ENCODE measurements at regions of chr5 and their contacts with region 1.

Region 1: GRCh38 chr5:142800776-142801494 is 30.8 kb downstream of the ARHGAP26 start:
- DNase-seq: peak; percentile 72
- ATAC-seq: peak; percentile 84
- H3K4me3 Mint-ChIP-seq: peak overlapping the region; percentile 69
- H3K27ac Mint-ChIP-seq: peak overlapping the region; percentile 97
- H3K4me1 Mint-ChIP-seq: peaks cover 66% of the 10 kb centered on the region
- H3K27me3 Mint-ChIP-seq: no peaks in the 10 kb centered on the region

Region 2: GRCh38 chr5:142386137-142387032 is 414.6 kb before region 1 on chr5:
- CTCF ChIA-PET with region 1: no interaction called
- POLR2A ChIA-PET with region 1: no interaction called
- intact Hi-C with region 1: no loop called
- DNase-seq: peak; percentile 13
- ATAC-seq: peak; percentile 71
- H3K4me3 Mint-ChIP-seq: no peak overlapping the region
- H3K27ac Mint-ChIP-seq: no peak overlapping the region
- H3K4me1 Mint-ChIP-seq: peaks cover 14% of the 10 kb centered on the region
- H3K27me3 Mint-ChIP-seq: no peaks in the 10 kb centered on the region

Region 3: DNA sequence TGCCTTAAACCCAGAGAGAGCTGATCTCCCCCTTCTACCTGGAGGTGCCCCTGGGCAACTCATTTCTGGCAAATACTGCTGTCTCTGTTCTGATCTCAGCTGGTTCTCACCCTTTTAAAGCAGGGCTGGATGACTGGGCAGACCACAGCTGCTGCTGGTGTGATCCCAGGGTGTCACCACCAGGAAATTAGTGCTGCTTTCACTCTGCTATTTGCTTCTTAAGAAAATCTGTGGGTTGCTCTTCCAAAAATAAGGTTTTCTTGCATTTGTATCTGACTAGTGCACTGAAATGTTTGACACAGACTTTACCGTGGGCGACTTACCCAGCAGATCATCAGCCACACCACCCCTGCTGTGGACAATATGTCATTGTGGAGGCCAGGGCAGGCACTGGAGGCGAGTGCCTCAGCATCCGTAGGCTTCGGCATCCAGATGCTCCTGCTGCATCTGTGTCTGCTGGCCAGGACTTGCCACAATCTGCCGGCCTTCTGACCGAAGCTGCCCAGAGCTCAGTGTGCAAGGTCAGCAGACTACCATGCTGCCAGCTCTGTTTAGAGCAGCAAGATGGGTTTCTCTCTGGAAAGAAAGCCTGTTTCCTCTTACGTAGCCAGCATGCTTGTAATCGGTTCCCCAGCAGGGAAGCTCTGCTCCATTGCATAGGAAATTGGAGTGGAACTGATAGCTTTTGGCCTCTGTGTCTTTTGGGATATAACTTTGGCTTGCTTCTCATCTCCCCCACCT is 17.2 kb before region 1 on chr5:
- CTCF ChIA-PET with region 1: interaction called, 11 read pairs
- POLR2A ChIA-PET with region 1: interaction called, 11 read pairs
- intact Hi-C with region 1: loop called (anchors 1 kb)
- DNase-seq: peak; percentile 88
- ATAC-seq: peak; percentile 93
- H3K4me3 Mint-ChIP-seq: peak overlapping the region; percentile 45
- H3K27ac Mint-ChIP-seq: peak overlapping the region; percentile 82
- H3K4me1 Mint-ChIP-seq: peaks cover 69% of the 10 kb centered on the region
- H3K27me3 Mint-ChIP-seq: no peaks in the 10 kb centered on the region

Region 4: DNA sequence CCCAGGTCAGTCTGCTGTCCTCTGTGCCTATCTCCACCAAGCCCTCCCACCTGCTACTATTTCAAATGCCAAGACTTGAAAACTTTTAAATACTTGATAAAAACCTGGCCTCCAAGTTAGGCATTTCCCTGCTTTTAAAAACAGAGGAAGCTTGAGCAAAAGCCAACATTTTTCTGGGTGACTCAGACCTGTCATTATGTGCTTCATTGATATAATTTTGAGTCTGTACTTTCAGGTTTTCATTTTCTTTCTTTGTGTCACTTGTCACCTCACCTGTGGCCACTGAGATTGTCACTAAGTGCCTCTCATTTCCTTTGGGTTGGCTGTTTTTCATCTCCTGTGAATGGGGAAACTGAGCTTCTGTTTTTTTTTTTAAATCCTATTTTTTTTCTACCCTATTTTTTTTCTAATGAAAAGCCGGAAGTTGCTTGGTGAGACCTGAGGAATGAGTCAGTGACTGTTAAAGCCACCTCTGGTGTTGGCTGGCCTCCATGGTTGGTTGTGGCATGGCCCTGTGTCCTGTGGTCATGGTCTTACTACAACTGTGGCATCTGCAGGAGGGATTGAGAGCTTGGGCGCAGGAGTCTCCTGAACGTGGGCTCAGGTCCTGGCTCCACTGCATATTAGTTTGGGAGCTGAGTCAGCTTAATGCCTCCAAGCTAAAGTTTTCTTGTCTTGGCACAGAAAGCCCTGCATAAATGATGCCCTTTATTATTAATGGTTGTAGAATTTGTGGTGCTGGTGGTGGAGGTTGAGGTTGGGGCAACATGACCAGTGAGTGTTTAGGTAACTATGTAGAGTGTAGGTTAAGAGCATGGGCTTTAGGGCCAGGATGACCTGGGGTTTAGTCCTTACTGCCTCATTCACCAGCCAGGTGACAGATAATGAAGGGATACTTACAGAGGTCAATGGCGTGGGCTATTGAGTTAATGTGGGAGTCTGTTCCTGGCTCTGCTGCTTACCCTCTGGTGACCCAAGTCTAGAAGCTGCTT is 26.1 kb after region 1 on chr5:
- CTCF ChIA-PET with region 1: interaction called, 15 read pairs
- POLR2A ChIA-PET with region 1: interaction called, 8 read pairs
- intact Hi-C with region 1: loop called (anchors 1 kb)
- DNase-seq: peak; percentile 60
- ATAC-seq: peak; percentile 57
- H3K4me3 Mint-ChIP-seq: no peak overlapping the region
- H3K27ac Mint-ChIP-seq: peak overlapping the region; percentile 63
- H3K4me1 Mint-ChIP-seq: peaks cover 73% of the 10 kb centered on the region
- H3K27me3 Mint-ChIP-seq: no peaks in the 10 kb centered on the region

Region 5: DNA sequence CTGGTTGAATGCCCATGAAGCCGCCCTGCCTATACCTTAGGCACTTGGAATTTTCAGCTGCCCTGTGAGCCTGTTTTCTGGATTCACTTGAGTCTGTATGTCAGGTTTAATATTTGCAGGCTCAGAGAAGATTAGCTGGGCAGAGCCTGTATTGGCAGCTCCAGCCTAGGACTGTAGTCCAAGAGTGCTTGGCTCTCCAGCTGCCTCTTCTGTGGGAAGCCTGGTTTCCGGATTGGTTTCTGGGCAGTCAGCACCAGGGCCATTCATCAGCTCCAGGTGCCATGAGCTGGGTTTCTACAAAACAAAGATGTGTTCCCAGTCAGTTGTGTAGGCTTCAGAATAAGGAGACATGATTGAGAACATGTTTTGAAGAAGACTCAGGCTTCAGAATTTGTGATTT is 59.3 kb after region 1 on chr5:
- CTCF ChIA-PET with region 1: interaction called, 3 read pairs
- POLR2A ChIA-PET with region 1: no interaction called
- intact Hi-C with region 1: loop called in 1 of 2 experiments (anchors 1 kb)
- DNase-seq: no peak
- ATAC-seq: no peak
- H3K4me3 Mint-ChIP-seq: no peak overlapping the region
- H3K27ac Mint-ChIP-seq: no peak overlapping the region
- H3K4me1 Mint-ChIP-seq: peaks cover 29% of the 10 kb centered on the region
- H3K27me3 Mint-ChIP-seq: no peaks in the 10 kb centered on the region

Region 6: GRCh38 chr5:143229896-143230675 is 429.2 kb after region 1 on chr5:
- CTCF ChIA-PET with region 1: no interaction called
- POLR2A ChIA-PET with region 1: no interaction called
- intact Hi-C with region 1: no loop called
- DNase-seq: peak; percentile 74
- ATAC-seq: peak; percentile 91
- H3K4me3 Mint-ChIP-seq: peak overlapping the region; percentile 35
- H3K27ac Mint-ChIP-seq: peak overlapping the region; percentile 86
- H3K4me1 Mint-ChIP-seq: peaks cover 26% of the 10 kb centered on the region
- H3K27me3 Mint-ChIP-seq: no peaks in the 10 kb centered on the region